Endothelial cell of umbilical vein (primary cell): ENCODE measurements at regions of chr2 and their contacts with region 1.

Region 1: GRCh38 chr2:205685314-205686055 is 3.2 kb downstream of the NRP2 start:
- DNase-seq: peak; percentile 40
- H3K4me3 ChIP-seq: peak overlapping the region; percentile 67 to 99 (median 96)
- H3K27ac ChIP-seq: peak overlapping the region; percentile 48
- H3K4me1 ChIP-seq: peaks cover 51% of the 10 kb centered on the region
- H3K27me3 ChIP-seq: no peaks in the 10 kb centered on the region
- CTCF ChIP-seq: no peak
- POLR2A ChIP-seq: no peak

Region 2: GRCh38 chr2:205539601-205540000 is 145.9 kb before region 1 on chr2:
- CTCF ChIA-PET with region 1: no interaction called
- POLR2A ChIA-PET with region 1: no interaction called
- dilution Hi-C with region 1: no loop called
- intact Hi-C with region 1: no loop called
- DNase-seq: no peak
- H3K4me3 ChIP-seq: no peak overlapping the region
- H3K27ac ChIP-seq: no peak overlapping the region
- H3K4me1 ChIP-seq: no peaks in the 10 kb centered on the region
- H3K27me3 ChIP-seq: no peaks in the 10 kb centered on the region
- CTCF ChIP-seq: no peak
- POLR2A ChIP-seq: no peak

Region 3: GRCh38 chr2:205698286-205699268 is 13.1 kb after region 1 on chr2:
- CTCF ChIA-PET with region 1: interaction called, 10 read pairs
- POLR2A ChIA-PET with region 1: interaction called, 4 read pairs
- dilution Hi-C with region 1: no loop called
- intact Hi-C with region 1: no loop called
- DNase-seq: no peak
- H3K4me3 ChIP-seq: no peak overlapping the region
- H3K27ac ChIP-seq: no peak overlapping the region
- H3K4me1 ChIP-seq: peaks cover 52% of the 10 kb centered on the region
- H3K27me3 ChIP-seq: no peaks in the 10 kb centered on the region
- CTCF ChIP-seq: no peak
- POLR2A ChIP-seq: no peak

Region 4: GRCh38 chr2:205706769-205707381 is 21.4 kb after region 1 on chr2:
- CTCF ChIA-PET with region 1: interaction called, 18 read pairs
- POLR2A ChIA-PET with region 1: interaction called, 18 read pairs
- dilution Hi-C with region 1: no loop called
- intact Hi-C with region 1: loop called (anchors 1 kb)
- DNase-seq: peak; percentile 93
- H3K4me3 ChIP-seq: no peak overlapping the region
- H3K27ac ChIP-seq: peak overlapping the region; percentile 82
- H3K4me1 ChIP-seq: peaks cover 69% of the 10 kb centered on the region
- H3K27me3 ChIP-seq: no peaks in the 10 kb centered on the region
- CTCF ChIP-seq: no peak
- POLR2A ChIP-seq: no peak

Region 5: DNA sequence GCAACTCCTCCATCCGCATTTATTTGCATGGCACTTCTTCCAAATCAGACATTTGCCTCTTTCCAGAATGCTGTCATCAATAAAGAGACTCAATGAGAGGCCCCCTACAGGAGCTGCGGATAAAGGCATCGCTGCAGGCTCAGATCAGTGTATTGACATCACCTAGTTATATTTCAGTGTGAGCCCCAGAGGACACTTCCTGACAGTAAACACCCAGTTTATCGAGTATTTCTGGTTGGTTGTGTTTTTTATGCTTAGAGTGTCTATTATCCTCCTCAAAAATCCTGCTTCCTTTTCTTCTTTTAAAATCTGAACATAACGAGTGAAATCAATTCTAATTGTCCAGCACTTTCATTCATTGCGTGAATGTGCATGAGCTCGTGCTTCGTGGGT is 35.6 kb after region 1 on chr2:
- CTCF ChIA-PET with region 1: interaction called, 29 read pairs
- POLR2A ChIA-PET with region 1: interaction called, 4 read pairs
- dilution Hi-C with region 1: no loop called
- intact Hi-C with region 1: loop called (anchors 1 kb)
- DNase-seq: no peak
- H3K4me3 ChIP-seq: no peak overlapping the region
- H3K27ac ChIP-seq: no peak overlapping the region
- H3K4me1 ChIP-seq: no peaks in the 10 kb centered on the region
- H3K27me3 ChIP-seq: no peaks in the 10 kb centered on the region
- CTCF ChIP-seq: peak; percentile 25 to 47
- POLR2A ChIP-seq: no peak

Region 6: DNA sequence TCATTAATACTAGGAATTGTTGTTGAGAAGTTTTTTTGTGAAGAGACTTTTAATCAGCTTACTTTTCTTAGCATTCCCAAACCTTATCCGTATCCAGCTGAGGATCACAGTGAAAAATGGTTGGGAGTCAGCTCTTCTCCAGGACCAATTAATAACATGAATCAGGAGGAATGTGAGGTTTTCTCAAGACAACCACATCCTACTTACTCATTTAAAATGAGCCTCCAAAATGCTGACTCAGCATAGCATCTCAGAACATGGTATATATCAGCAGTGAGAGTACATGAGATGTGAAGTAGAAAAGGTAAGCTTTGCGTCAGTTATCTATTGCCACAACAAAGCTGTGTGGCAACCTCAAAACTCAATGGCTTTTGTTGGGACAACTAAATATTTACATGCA is 137.1 kb after region 1 on chr2:
- CTCF ChIA-PET with region 1: no interaction called
- POLR2A ChIA-PET with region 1: no interaction called
- dilution Hi-C with region 1: no loop called
- intact Hi-C with region 1: no loop called
- DNase-seq: no peak
- H3K4me3 ChIP-seq: no peak overlapping the region
- H3K27ac ChIP-seq: no peak overlapping the region
- H3K4me1 ChIP-seq: no peaks in the 10 kb centered on the region
- H3K27me3 ChIP-seq: peaks cover 10 to 11% of the 10 kb centered on the region in 2 experiments
- CTCF ChIP-seq: no peak
- POLR2A ChIP-seq: no peak

Region 7: GRCh38 chr2:205885492-205886099 is 200.1 kb after region 1 on chr2:
- CTCF ChIA-PET with region 1: no interaction called
- POLR2A ChIA-PET with region 1: no interaction called
- dilution Hi-C with region 1: no loop called
- intact Hi-C with region 1: loop called (anchors 1 kb)
- DNase-seq: peak; percentile 76
- H3K4me3 ChIP-seq: no peak overlapping the region
- H3K27ac ChIP-seq: no peak overlapping the region
- H3K4me1 ChIP-seq: peaks cover 5% of the 10 kb centered on the region
- H3K27me3 ChIP-seq: peaks cover 0 to 2% of the 10 kb centered on the region in 2 experiments
- CTCF ChIP-seq: peak; percentile 90 to 93
- POLR2A ChIP-seq: no peak